ENCODE measurements at regions of chr4 and their contacts with region 1.

Region 1: DNA sequence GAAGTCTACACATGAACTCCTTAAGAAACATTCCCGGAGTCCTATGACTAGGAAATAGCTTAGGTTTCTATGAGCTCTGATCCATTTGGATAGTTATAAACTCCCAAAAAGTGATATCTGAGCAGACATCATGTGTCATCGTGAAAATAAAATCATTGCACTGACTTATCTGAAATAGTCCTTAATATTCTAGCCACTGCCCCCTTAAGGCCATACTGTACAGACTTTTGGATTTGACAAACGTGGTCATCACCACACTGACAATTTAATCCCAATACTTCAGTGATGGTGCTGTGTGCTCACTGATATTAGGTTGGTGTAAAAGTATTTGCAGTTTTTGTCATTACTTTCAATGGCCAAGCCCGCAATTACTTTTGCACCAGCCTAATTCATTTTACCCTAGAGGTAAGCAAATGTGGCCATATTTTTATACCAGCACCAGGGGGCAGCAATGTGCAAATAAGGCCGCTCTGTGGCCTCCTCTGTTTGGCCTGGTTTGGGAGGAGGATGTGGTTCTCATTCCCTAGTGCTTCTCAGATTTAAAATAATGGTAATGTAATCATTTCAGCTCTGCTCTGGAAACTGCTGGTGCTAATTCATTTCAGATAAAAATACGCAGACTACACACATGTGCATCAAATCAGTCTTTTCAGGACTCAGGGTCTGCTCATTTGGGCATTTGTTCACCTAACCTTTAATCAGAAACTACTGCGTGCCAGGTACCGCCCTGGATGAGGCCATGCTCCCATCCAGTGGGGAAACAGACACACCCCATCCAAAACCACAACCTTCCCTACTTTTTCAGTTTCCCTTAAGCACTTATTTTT is 196.4 kb upstream of the C1QTNF7 start:
- DNase-seq: no peak
- H3K4me3 ChIP-seq: no peak overlapping the region
- H3K27me3 ChIP-seq: 0 out of 2 replicates have a peak, but pooled peaks cover 2% of the 10 kb centered on the region
- CTCF ChIP-seq: peak; percentile 76

Region 2: GRCh38 chr4:15043226-15043625 is 188.3 kb before region 1 on chr4:
- CTCF ChIA-PET with region 1: no interaction called
- POLR2A ChIA-PET with region 1: no interaction called
- DNase-seq: no peak
- H3K4me3 ChIP-seq: no peak overlapping the region
- H3K27me3 ChIP-seq: no peaks in the 10 kb centered on the region
- CTCF ChIP-seq: no peak

Region 3: DNA sequence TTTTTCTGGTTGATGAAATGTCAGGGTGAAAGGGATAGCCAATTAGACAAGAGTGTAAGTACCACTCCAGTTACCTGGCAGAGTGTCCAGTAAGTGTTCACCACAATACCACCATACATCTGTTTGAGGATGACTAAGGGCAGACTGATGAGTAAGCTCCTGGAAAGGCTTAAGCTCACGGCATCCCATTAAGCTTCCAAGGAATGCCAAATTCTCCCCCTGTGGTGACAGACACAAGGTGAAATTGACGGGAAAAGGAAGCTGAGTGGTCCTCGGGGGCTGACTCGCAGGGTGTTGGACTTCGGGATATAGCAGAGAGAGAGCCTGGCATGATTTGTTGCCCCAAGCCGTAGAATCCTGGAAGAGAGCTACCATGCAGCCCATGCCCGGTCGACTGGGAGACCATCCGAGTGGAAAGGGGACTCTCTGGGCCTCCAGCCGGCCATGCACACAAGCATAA is 463.8 kb after region 1 on chr4:
- CTCF ChIA-PET with region 1: no interaction called
- POLR2A ChIA-PET with region 1: interaction called, 15 read pairs
- DNase-seq: peak; percentile 86
- H3K4me3 ChIP-seq: no peak overlapping the region
- H3K27me3 ChIP-seq: no peaks in the 10 kb centered on the region
- CTCF ChIP-seq: no peak

Measured in BJ (cell line).